CD8-positive, alpha-beta T cell (primary cell): ENCODE measurements at regions of chr5 and their contacts with region 1.

Region 1: DNA sequence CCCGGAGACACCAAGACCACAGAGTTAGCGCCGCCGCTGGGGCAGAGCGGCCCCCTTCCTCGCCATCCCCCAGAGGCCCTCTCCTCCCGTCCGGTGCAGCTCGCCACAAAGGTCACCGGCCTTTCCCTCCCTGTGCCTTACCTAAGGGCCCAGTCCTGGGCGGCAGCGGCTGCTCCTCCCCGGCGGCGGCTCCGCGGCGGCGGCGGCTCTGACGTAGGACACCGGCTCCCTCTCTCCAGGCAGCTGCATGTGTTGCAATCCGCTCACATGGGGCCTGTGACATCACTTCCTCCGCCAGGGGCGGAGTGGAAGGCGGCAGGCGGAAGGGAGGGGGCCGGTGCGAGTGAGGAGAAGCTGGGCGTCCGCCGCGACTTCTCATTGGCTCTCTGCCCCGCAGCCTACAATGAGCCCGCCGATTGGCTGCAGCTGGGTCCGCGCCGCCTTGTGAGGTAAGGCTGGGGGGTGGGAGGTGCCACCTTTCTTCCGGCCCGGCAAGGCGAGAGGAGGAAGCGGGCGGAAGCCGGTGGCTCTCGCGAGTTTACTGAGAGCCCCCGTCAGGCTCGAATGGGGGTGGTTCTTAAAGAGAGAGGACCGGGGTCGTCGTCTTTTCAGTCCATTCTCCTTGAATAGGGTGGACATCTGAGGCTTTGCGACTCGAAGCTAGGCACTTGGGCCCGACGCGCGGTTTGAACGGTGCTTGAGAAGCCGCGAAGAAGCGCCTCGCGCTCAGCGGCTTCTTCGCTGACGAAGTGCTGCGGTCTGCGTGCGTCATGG is at the start of gene ETF1:
- DNase-seq: peak; percentile 99 to 100 (median 99)
- ATAC-seq: peak; percentile 89
- H3K4me3 ChIP-seq: peak within 1 kb of the TSS; percentile 86 to 90
- H3K4me3 Mint-ChIP-seq: peak within 1 kb of the TSS; percentile 100
- H3K27ac ChIP-seq: peak within 1 kb of the TSS; percentile 98 to 100
- H3K27ac Mint-ChIP-seq: peak within 1 kb of the TSS; percentile 100
- H3K4me1 ChIP-seq: peaks cover 52% of the 10 kb centered on the region
- H3K4me1 Mint-ChIP-seq: peaks cover 72% of the 10 kb centered on the region
- H3K27me3 ChIP-seq: no peaks in the 10 kb centered on the region
- H3K27me3 Mint-ChIP-seq: no peaks in the 10 kb centered on the region
- CTCF ChIP-seq: no peak
- total RNA-seq, gene ETF1: 241 to 247 TPM

Region 2: GRCh38 chr5:137754126-137754960 is 788.8 kb before region 1 on chr5 and contains the start of gene HNRNPA0:
- CTCF ChIA-PET with region 1: no interaction called
- POLR2A ChIA-PET with region 1: no interaction called
- intact Hi-C with region 1: loop called (anchors 1 to 10 kb)
- DNase-seq: peak; percentile 90 to 99 (median 98)
- ATAC-seq: peak; percentile 82
- H3K4me3 ChIP-seq: peak within 1 kb of the TSS; percentile 92 to 96
- H3K4me3 Mint-ChIP-seq: peak within 1 kb of the TSS; percentile 99
- H3K27ac ChIP-seq: peak within 1 kb of the TSS; percentile 98 to 100
- H3K27ac Mint-ChIP-seq: peak within 1 kb of the TSS; percentile 100
- H3K4me1 ChIP-seq: peaks cover 26% of the 10 kb centered on the region
- H3K4me1 Mint-ChIP-seq: peaks cover 32% of the 10 kb centered on the region
- H3K27me3 ChIP-seq: no peaks in the 10 kb centered on the region
- H3K27me3 Mint-ChIP-seq: no peaks in the 10 kb centered on the region
- CTCF ChIP-seq: no peak
- total RNA-seq, gene HNRNPA0: 53.7 to 57.0 TPM

Region 3: DNA sequence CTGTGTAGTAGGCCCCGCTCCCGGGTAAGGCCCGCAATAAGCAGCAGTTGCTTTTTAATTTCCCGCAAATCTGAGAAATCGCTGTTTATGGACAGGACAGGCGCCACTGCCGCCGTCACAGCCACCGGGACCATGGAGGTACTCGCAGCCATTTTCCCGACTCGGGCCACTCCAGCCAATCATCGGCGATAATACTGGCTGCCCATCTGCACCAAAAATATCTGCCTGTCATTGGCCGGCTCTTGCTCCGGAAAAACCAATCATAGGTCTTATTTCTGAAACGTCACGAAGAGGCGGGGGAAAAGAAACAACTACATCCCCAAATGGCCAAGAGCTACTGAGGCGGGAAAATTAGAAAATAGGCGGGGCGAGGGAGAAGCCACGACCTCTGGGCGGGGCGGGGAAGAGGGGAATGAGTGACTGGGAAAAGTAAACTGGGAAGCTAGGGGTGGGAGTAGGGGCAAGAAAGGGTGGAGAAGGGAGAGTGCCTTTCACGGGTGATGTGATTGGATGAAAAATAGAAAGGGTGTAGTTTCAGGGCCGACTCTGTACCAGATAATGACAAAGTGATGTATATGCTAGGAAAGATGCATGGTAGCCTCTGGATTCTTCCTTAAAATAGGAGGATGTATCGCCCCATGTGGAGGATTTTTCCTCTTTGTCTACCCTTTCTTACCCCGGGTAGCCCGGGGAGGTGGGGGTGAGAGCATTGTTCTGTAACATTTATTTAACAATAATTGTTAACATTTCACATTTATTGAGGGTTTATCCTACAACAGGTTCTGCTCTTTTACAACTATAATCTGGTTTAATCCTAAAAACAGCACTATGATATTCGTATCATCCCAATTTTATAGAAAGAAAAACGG is 329.7 kb before region 1 on chr5 and contains the start of gene CDC23:
- CTCF ChIA-PET with region 1: no interaction called
- POLR2A ChIA-PET with region 1: interaction called, 4 read pairs
- intact Hi-C with region 1: loop called in 1 of 2 experiments (anchors 1 kb)
- DNase-seq: peak; percentile 76 to 97 (median 89)
- ATAC-seq: peak; percentile 97
- H3K4me3 ChIP-seq: peak within 1 kb of the TSS; percentile 91 to 93
- H3K4me3 Mint-ChIP-seq: peak within 1 kb of the TSS; percentile 100
- H3K27ac ChIP-seq: peak within 1 kb of the TSS; percentile 81 to 86
- H3K27ac Mint-ChIP-seq: peak within 1 kb of the TSS; percentile 98
- H3K4me1 ChIP-seq: peaks cover 18% of the 10 kb centered on the region
- H3K4me1 Mint-ChIP-seq: peaks cover 21% of the 10 kb centered on the region
- H3K27me3 ChIP-seq: no peaks in the 10 kb centered on the region
- H3K27me3 Mint-ChIP-seq: peaks cover 2% of the 10 kb centered on the region
- CTCF ChIP-seq: no peak
- total RNA-seq, gene CDC23: 18.2 to 20.5 TPM

Region 4: DNA sequence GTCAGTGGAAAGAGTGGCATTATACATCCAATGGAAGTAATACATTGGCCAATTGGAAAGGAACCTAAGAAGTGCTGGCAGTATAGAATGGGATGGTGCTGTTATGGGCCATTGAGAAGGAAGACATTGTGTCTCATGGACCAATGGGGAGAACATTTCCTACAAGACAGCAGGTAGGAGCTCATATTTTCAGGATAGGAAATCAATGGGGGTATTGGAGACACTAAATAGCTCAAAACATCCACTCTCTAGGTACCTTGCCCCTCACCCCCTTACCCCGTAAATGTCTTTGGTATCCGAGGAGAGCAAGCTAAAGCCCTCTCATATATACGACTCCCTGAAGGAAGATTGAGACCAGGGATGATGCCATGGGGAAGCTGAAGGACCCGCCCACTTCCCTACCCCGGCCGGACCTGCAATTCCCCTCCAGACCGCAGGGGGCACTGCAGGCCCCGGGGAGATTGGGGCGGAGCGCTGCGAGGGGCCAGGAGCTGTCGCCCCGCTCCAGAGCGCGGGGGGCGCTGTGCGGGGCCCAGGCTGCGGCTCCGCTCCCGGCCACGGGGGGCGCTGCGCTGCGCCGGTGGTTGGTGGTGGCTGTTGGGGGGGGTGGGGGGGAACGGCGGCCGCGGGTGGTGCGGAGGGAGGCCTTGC is 190.9 kb before region 1 on chr5 and contains the start of gene KDM3B:
- CTCF ChIA-PET with region 1: interaction called, 9 read pairs
- POLR2A ChIA-PET with region 1: interaction called, 8 read pairs
- intact Hi-C with region 1: loop called in 1 of 2 experiments (anchors 1 kb)
- DNase-seq: peak; percentile 86 to 96 (median 92)
- ATAC-seq: peak; percentile 89
- H3K4me3 ChIP-seq: peak within 1 kb of the TSS; percentile 87 to 97
- H3K4me3 Mint-ChIP-seq: peak within 1 kb of the TSS; percentile 97
- H3K27ac ChIP-seq: peak within 1 kb of the TSS; percentile 83 to 89
- H3K27ac Mint-ChIP-seq: peak within 1 kb of the TSS; percentile 97
- H3K4me1 ChIP-seq: peaks cover 34% of the 10 kb centered on the region
- H3K4me1 Mint-ChIP-seq: peaks cover 47% of the 10 kb centered on the region
- H3K27me3 ChIP-seq: no peaks in the 10 kb centered on the region
- H3K27me3 Mint-ChIP-seq: no peaks in the 10 kb centered on the region
- CTCF ChIP-seq: peak; percentile 99
- total RNA-seq, gene KDM3B: 60.2 to 60.3 TPM

Region 5: GRCh38 chr5:138565100-138565821 is 22.1 kb after region 1 on chr5:
- CTCF ChIA-PET with region 1: interaction called, 4 read pairs
- POLR2A ChIA-PET with region 1: interaction called, 8 read pairs
- intact Hi-C with region 1: loop called in 1 of 2 experiments (anchors 2 kb)
- DNase-seq: peak in 5 of 9 experiments; percentile 20 to 93 (median 52)
- ATAC-seq: peak; percentile 86
- H3K4me3 ChIP-seq: peak overlapping the region in 1 of 2 experiments; percentile 1
- H3K4me3 Mint-ChIP-seq: peak overlapping the region; percentile 64
- H3K27ac ChIP-seq: peak overlapping the region; percentile 62 to 88
- H3K27ac Mint-ChIP-seq: peak overlapping the region; percentile 89
- H3K4me1 ChIP-seq: peaks cover 45% of the 10 kb centered on the region
- H3K4me1 Mint-ChIP-seq: peaks cover 69% of the 10 kb centered on the region
- H3K27me3 ChIP-seq: no peaks in the 10 kb centered on the region
- H3K27me3 Mint-ChIP-seq: no peaks in the 10 kb centered on the region
- CTCF ChIP-seq: no peak

Region 6: DNA sequence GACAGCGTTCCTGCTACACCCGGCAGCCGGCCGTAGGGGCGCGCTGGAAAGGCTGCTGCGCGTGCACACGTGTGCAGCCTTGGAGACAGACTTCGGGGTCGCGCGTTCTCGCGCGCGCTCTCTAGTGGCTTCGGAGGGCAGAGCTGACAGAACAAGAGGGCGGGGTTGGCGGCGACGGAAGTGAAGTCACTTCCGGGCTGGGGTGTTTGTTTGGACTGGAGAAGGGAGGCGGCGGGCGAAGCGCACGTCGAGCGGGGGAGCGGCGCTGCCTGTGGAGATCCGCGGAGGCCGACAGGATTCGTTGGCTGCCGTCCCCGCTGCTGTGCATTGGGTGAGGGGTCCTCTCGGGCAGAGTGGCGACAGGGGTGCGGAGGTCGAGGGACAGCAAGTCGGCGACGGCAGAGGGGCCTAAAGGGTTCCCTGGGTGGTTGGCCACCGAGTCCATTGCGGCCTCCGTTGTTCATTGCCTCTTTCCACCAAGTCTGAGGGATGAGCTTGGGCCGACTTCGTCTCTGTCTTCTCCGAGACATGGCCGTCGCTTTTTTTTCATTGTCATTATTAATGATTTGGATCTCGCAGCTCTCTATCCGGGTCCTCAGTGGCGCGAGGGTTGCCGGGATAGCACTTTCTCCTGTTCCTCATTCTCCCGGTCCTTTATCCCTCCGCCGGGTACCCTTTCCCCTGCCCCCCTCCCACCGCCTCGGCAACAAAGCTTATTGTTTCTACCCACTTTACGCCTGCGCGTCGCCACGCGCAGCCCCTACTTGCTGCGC is 798.7 kb after region 1 on chr5 and contains the start of gene PAIP2:
- CTCF ChIA-PET with region 1: no interaction called
- POLR2A ChIA-PET with region 1: interaction called, 3 read pairs
- intact Hi-C with region 1: loop called in 1 of 2 experiments (anchors 1 kb)
- DNase-seq: peak; percentile 96 to 99 (median 98)
- ATAC-seq: peak; percentile 79
- H3K4me3 ChIP-seq: peak within 1 kb of the TSS; percentile 92 to 100
- H3K4me3 Mint-ChIP-seq: peak within 1 kb of the TSS; percentile 99
- H3K27ac ChIP-seq: peak within 1 kb of the TSS; percentile 100
- H3K27ac Mint-ChIP-seq: peak within 1 kb of the TSS; percentile 100
- H3K4me1 ChIP-seq: peaks cover 36% of the 10 kb centered on the region
- H3K4me1 Mint-ChIP-seq: peaks cover 48% of the 10 kb centered on the region
- H3K27me3 ChIP-seq: no peaks in the 10 kb centered on the region
- H3K27me3 Mint-ChIP-seq: no peaks in the 10 kb centered on the region
- CTCF ChIP-seq: peak; percentile 68
- total RNA-seq, gene PAIP2: 173 to 179 TPM

Region 7: DNA sequence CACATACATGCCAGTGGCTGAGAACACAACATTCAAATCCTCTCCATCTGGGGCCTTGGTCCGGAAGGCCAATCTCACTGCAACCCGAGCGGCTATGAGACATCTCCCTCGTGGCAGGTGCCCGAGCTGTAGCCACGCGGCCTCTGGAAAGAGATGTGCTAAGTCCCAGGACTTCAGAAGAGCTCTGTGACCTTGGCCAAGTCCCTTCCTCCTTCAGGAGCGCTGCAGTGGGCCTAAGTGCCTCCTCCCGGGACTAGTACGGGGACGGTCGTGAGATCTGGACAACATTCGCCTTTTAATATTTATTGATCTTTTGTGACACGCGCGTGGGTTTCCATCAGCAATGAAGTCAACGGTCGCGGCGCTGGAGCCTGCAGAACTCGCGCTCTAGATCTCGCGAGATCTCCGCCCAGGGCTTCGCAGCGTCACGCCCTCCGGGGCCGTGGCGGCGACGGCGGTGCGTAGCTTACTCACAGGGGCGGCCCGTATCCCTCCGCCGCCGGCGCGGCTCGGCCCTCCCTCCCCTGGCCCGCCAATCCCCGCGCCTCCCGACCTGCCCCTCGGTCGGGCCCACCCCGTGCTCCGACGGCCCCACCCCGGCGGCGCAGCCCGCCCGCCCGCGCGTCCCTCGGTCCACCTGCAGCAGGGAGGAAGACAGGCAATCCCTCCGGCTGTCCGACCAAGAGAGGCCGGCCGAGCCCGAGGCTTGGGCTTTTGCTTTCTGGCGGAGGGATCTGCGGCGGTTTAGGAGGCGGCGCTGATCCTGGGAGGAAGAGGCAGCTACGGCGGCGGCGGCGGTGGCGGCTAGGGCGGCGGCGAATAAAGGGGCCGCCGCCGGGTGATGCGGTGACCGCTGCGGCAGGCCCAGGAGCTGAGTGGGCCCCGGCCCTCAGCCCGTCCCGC is 1017.9 kb after region 1 on chr5 and contains the start of gene UBE2D2:
- CTCF ChIA-PET with region 1: no interaction called
- POLR2A ChIA-PET with region 1: no interaction called
- intact Hi-C with region 1: loop called (anchors 2 to 10 kb)
- DNase-seq: peak; percentile 96 to 99 (median 97)
- ATAC-seq: peak; percentile 84
- H3K4me3 ChIP-seq: peak within 1 kb of the TSS; percentile 84 to 91
- H3K4me3 Mint-ChIP-seq: peak within 1 kb of the TSS; percentile 93
- H3K27ac ChIP-seq: peak within 1 kb of the TSS; percentile 87 to 89
- H3K27ac Mint-ChIP-seq: peak within 1 kb of the TSS; percentile 97
- H3K4me1 ChIP-seq: peaks cover 30% of the 10 kb centered on the region
- H3K4me1 Mint-ChIP-seq: peaks cover 35% of the 10 kb centered on the region
- H3K27me3 ChIP-seq: no peaks in the 10 kb centered on the region
- H3K27me3 Mint-ChIP-seq: no peaks in the 10 kb centered on the region
- CTCF ChIP-seq: no peak
- total RNA-seq, gene UBE2D2: 180 TPM